ENCODE measurements at regions of chr5 and their contacts with region 1.

Region 1: GRCh38 chr5:139371482-139372435 is 11.3 kb downstream of the SLC23A1 start:
- DNase-seq: no peak
- H3K4me3 Mint-ChIP-seq: peak overlapping the region; percentile 16
- H3K27ac Mint-ChIP-seq: peak overlapping the region; percentile 53
- H3K4me1 Mint-ChIP-seq: peaks cover 16% of the 10 kb centered on the region
- H3K27me3 Mint-ChIP-seq: no peaks in the 10 kb centered on the region

Region 2: GRCh38 chr5:138824924-138825863 is 546.6 kb before region 1 on chr5:
- intact Hi-C with region 1: loop called (anchors 10 kb)
- DNase-seq: no peak
- H3K4me3 Mint-ChIP-seq: no peak overlapping the region
- H3K27ac Mint-ChIP-seq: no peak overlapping the region
- H3K4me1 Mint-ChIP-seq: no peaks in the 10 kb centered on the region
- H3K27me3 Mint-ChIP-seq: no peaks in the 10 kb centered on the region

Region 3: GRCh38 chr5:138975098-138975847 is 396.5 kb before region 1 on chr5:
- intact Hi-C with region 1: no loop called
- DNase-seq: no peak
- H3K4me3 Mint-ChIP-seq: no peak overlapping the region
- H3K27ac Mint-ChIP-seq: no peak overlapping the region
- H3K4me1 Mint-ChIP-seq: peaks cover 11% of the 10 kb centered on the region
- H3K27me3 Mint-ChIP-seq: no peaks in the 10 kb centered on the region

Region 4: GRCh38 chr5:139177809-139178588 is 193.8 kb before region 1 on chr5:
- intact Hi-C with region 1: no loop called
- DNase-seq: no peak
- H3K4me3 Mint-ChIP-seq: no peak overlapping the region
- H3K27ac Mint-ChIP-seq: no peak overlapping the region
- H3K4me1 Mint-ChIP-seq: peaks cover 24% of the 10 kb centered on the region
- H3K27me3 Mint-ChIP-seq: no peaks in the 10 kb centered on the region

Region 5: GRCh38 chr5:139360384-139360783 is 11.4 kb before region 1 on chr5:
- intact Hi-C with region 1: no loop called
- DNase-seq: no peak
- H3K4me3 Mint-ChIP-seq: no peak overlapping the region
- H3K27ac Mint-ChIP-seq: no peak overlapping the region
- H3K4me1 Mint-ChIP-seq: no peaks in the 10 kb centered on the region
- H3K27me3 Mint-ChIP-seq: no peaks in the 10 kb centered on the region

Region 6: GRCh38 chr5:139385061-139386049 is 13.6 kb after region 1 on chr5:
- intact Hi-C with region 1: loop called (anchors 2 kb)
- DNase-seq: no peak
- H3K4me3 Mint-ChIP-seq: peak overlapping the region; percentile 68
- H3K27ac Mint-ChIP-seq: peak overlapping the region; percentile 86
- H3K4me1 Mint-ChIP-seq: peaks cover 66% of the 10 kb centered on the region
- H3K27me3 Mint-ChIP-seq: no peaks in the 10 kb centered on the region

Measured in activated T-helper 1 cell treated with anti-CD3 and anti-CD28 coated beads, Interleukin-12 subunit alpha, Interleukin-12 subunit beta, Interleukin-2, Interleukin-4 antibody, amounts not matched to agents 30 ng/mL and 10 ng/mL and 1 ng/mL, durations not matched to agents 14 hours and 24 hours and 36 hours (primary cell).